Prostate gland (tissue), 2 donors: ENCODE measurements at regions of chr6 and their contacts with region 1.

Region 1: DNA sequence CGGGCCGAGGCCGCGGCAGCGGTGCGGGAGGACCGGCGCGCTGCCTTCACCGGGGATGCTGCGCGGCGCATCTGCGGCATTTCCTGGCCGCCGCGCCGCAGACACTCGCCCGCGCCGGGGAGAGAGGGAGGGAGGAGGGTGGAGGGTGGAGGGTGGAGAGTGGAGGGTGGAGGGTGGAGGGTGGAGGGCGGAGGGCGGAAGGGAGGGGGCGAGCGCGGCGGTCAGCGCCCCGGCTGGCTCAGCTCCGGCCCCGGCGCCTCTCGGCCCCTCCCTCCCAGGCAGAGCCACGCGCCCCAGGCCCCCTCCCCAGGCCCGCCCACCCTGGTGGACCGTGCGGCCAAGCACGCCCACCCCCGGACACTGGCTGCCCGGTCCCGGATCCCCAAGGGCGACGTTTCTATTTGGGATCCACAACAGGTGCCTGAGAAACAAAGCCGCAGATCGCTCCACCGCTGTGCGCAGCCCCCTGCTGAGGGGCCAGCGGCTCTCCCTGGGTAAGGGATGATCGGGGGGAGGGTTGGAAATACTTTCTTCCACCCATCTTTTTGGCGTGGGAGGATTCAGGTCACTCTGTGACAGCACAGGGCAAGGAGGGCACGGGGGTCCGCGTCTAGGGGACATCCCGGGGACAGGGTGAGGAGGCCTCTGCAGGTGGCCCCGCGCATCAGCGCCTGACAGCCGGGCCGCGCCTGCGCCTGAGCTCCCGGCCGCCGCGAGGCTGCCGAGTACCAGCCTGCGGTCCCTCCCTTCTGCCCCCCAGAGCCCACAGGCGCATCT is 111.1 kb upstream of the BEND6 start:
- DNase-seq: peak; percentile 20
- H3K4me3 ChIP-seq: peak overlapping the region; percentile 44 to 49
- H3K27ac ChIP-seq: peak overlapping the region; percentile 50 to 70
- H3K4me1 ChIP-seq: no peaks in the 10 kb centered on the region
- H3K27me3 ChIP-seq: no peaks in the 10 kb centered on the region
- CTCF ChIP-seq: peak in 2 of 4 experiments; percentile 37 to 41
- POLR2A ChIP-seq: peak; percentile 8

Region 2: GRCh38 chr6:56772737-56773184 is 71.0 kb before region 1 on chr6:
- intact Hi-C with region 1: loop called (anchors 5 kb)
- DNase-seq: no peak
- H3K4me3 ChIP-seq: no peak overlapping the region
- H3K27ac ChIP-seq: no peak overlapping the region
- H3K4me1 ChIP-seq: no peaks in the 10 kb centered on the region
- H3K27me3 ChIP-seq: no peaks in the 10 kb centered on the region
- CTCF ChIP-seq: no peak
- POLR2A ChIP-seq: no peak

Region 3: DNA sequence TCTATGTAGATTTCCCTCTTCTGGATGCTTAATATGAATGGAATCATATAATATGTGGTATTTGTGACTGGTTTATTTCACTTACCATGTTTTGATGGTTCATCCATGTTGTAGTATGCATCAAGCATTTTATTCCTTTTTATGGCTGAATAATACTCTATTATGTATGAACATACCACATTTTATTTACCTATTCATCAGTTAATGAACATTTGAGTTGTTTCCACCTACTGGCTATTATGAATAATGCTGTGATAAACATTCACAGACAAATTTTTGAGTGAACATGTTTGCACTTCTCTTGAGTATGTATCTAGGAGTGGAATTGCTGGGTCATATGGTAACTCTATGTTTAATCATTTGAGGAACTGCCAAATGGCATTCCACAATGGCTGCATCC is 231.3 kb after region 1 on chr6:
- intact Hi-C with region 1: no loop called
- DNase-seq: no peak
- H3K4me3 ChIP-seq: no peak overlapping the region
- H3K27ac ChIP-seq: no peak overlapping the region
- H3K4me1 ChIP-seq: no peaks in the 10 kb centered on the region
- H3K27me3 ChIP-seq: no peaks in the 10 kb centered on the region
- CTCF ChIP-seq: no peak
- POLR2A ChIP-seq: no peak

Region 4: DNA sequence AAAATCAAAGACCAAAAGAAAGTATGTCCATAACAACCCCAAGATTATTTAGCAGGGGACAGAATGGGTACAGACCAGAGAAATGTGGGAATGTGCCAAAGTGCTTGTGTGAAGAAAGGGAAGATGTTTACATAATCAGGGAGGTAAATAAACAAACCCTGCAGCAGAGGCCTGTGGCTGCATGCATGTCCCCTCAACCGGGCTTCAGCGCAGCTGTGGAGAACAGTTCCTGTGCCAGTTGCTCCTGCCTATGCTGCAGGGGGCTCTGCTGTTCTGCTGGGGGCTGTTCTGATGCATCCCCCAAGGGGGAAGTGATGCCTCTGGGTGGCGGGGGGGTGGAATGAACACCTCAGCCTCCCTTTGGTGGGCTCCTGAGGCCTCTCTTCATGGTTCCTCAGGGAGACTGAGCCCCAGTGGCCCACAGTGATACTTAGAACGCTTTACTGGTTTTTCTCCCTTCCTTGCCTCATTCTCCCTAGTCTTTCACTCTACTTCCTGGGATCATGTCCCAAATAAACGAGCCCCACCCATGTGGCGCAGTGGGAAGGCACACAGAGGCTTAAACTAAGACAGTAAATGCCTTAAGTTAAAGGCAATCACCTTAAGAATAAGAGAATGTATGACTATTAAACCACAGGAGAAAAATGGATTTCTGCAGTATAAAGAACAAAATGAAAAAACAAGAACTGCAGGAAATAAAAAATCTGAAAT is 355.3 kb after region 1 on chr6:
- intact Hi-C with region 1: no loop called
- DNase-seq: peak; percentile 56
- H3K4me3 ChIP-seq: no peak overlapping the region
- H3K27ac ChIP-seq: peak overlapping the region; percentile 49 to 55
- H3K4me1 ChIP-seq: peaks cover 6% of the 10 kb centered on the region
- H3K27me3 ChIP-seq: no peaks in the 10 kb centered on the region
- CTCF ChIP-seq: no peak
- POLR2A ChIP-seq: no peak